HepG2 (cell line): ENCODE measurements at regions of chr5 and their contacts with region 1.

Region 1: DNA sequence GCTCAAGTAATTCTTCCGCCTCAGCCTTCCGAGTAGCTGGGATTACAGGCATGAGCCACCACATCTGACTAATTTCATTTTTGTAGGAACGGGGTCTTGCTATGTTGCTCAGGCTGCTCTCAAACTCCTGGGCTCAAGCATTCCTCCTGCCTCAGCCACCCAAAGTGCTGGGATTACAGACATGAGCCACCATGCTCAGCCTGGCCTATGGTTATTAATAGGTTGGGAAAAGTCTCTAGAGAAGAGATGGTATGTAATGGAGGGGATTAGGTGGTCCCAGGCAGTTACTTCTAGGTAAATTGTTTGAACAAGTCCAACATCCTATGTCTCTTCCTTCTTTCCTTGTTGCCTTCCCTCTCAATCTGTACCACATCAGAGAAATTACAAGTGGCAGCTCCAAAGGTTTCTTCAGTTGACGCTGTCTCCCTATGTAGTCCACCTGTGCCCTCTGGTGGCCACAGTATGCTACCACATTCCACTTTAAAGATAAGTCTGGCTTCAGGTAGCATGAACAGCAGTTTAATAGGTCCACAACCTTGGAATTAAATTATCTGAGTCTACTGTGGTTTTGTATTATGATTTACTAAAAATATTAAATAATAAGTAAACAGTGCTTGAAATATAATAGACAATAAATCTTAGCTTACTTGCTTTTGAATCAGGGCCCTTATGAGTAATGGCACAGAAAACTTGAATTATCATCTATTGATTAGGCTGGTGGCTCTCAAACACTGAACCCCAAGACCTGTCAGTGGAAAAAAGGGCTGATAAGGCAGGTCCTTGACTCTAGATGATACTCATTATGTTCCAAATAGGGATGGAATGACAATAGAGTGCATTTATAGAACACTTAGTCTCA is 9.7 kb downstream of the TIGD6 start:
- DNase-seq: peak; percentile 76
- ATAC-seq: peak; percentile 91
- H3K4me3 ChIP-seq: no peak overlapping the region
- H3K27ac ChIP-seq: no peak overlapping the region
- H3K4me1 ChIP-seq: peaks cover 19% of the 10 kb centered on the region
- H3K27me3 ChIP-seq: no peaks in the 10 kb centered on the region
- CTCF ChIP-seq: peak; percentile 93
- EP300 ChIP-seq: no peak
- POLR2A ChIP-seq: no peak
- RAD21 ChIP-seq: peak; percentile 86

Region 2: DNA sequence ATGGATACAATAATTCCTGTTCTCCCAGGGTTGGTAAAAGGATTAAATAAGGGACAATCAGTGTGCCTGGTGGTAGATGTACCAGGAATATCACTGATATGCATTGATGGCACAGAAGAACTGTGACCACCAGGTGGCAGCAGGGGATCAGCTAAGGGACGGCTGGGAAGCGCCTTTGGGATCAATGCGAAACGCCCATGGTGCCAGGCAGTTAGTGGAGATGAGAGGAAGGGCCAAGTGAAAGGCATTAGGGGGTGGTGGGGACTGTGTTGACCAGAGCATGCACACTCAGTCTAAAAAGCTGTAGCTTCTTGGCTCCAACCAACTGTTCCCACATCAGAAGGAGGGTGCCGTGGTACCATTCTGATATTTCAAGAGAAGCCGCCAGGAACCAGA is 353.9 kb before region 1 on chr5:
- CTCF ChIA-PET with region 1: no interaction called
- POLR2A ChIA-PET with region 1: no interaction called
- in situ Hi-C with region 1: loop called (anchors 25 kb)
- intact Hi-C with region 1: no loop called
- DNase-seq: peak; percentile 63
- ATAC-seq: peak; percentile 73
- H3K4me3 ChIP-seq: no peak overlapping the region
- H3K27ac ChIP-seq: no peak overlapping the region
- H3K4me1 ChIP-seq: peaks cover 27% of the 10 kb centered on the region
- H3K27me3 ChIP-seq: no peaks in the 10 kb centered on the region
- CTCF ChIP-seq: peak; percentile 94
- EP300 ChIP-seq: no peak
- POLR2A ChIP-seq: no peak
- RAD21 ChIP-seq: peak; percentile 91

Region 3: DNA sequence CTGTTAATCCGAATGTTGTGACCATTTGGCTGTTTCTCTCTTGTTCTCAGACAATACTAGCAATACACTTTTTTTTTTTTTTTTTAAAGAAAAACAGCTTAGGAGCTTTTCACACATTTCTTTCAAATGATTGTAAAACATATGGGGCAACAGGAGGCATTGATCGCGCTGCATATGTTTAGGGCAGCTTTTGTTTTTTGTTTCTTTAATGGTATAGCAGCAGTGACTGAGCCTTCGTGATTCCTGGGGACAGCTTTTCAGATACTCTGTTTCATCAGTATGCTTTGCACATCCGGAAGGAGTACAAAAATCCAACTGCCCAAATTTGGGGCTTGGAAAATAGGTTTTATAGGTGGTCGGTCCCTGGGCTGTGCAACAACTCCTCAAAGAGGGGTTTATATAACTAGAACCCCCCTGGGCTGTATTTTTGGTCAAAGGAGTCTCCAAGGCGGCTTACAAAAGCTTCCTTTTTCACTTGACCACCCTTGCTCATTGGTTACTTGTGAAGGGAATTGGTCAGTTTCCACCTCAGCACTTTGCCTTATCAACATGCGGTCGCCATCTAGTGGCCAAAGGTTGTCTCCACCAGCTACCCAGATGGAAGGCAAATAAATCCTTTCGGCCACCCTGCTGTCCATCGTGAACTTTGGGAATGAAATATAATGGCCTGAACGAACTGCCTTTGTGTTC is 138.0 kb before region 1 on chr5:
- CTCF ChIA-PET with region 1: interaction called, 5 read pairs
- POLR2A ChIA-PET with region 1: no interaction called
- in situ Hi-C with region 1: no loop called
- intact Hi-C with region 1: loop called (anchors 5 kb)
- DNase-seq: peak; percentile 58
- ATAC-seq: peak; percentile 92
- H3K4me3 ChIP-seq: no peak overlapping the region
- H3K27ac ChIP-seq: no peak overlapping the region
- H3K4me1 ChIP-seq: no peaks in the 10 kb centered on the region
- H3K27me3 ChIP-seq: no peaks in the 10 kb centered on the region
- CTCF ChIP-seq: peak; percentile 88
- EP300 ChIP-seq: no peak
- POLR2A ChIP-seq: no peak
- RAD21 ChIP-seq: 0 out of 2 replicates have a peak, but pooled peaks have one; percentile 35

Region 4: DNA sequence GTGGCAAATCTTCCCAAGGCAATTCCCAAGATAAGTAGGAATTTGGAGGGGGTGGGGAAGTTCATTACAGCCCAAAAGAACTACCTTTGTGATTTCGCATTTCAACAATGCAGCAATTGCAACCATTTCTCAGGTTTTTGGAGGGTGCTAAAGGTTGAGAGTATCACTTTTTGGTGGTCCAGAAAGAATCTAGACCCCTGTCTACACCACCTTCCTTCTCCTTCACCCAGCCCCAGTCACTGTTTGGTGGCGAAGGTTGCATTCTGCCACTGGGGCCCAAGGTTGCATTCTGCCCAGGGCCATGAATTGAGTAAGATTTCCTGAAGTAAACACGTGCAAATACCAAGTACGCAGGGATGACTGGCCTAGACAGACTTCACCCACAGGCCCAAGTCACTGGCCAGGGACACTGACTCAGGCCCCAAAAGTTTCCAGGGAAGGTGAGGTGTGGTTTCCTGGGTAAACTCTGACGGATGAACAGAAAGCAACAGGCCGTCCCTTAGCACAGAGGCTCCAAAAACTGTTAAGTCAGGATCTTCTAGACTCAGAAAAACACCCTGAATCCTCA is 51.9 kb before region 1 on chr5:
- CTCF ChIA-PET with region 1: interaction called, 5 read pairs
- POLR2A ChIA-PET with region 1: no interaction called
- in situ Hi-C with region 1: loop called (anchors 10 kb)
- intact Hi-C with region 1: no loop called
- DNase-seq: no peak
- ATAC-seq: 0 out of 3 replicates have a peak, but pooled peaks have one; percentile 17
- H3K4me3 ChIP-seq: no peak overlapping the region
- H3K27ac ChIP-seq: no peak overlapping the region
- H3K4me1 ChIP-seq: peaks cover 81% of the 10 kb centered on the region
- H3K27me3 ChIP-seq: peaks cover 1 to 5% of the 10 kb centered on the region in 2 experiments; a peak in 1 of 5 replicates
- CTCF ChIP-seq: no peak
- EP300 ChIP-seq: no peak
- POLR2A ChIP-seq: no peak
- RAD21 ChIP-seq: no peak

Region 5: DNA sequence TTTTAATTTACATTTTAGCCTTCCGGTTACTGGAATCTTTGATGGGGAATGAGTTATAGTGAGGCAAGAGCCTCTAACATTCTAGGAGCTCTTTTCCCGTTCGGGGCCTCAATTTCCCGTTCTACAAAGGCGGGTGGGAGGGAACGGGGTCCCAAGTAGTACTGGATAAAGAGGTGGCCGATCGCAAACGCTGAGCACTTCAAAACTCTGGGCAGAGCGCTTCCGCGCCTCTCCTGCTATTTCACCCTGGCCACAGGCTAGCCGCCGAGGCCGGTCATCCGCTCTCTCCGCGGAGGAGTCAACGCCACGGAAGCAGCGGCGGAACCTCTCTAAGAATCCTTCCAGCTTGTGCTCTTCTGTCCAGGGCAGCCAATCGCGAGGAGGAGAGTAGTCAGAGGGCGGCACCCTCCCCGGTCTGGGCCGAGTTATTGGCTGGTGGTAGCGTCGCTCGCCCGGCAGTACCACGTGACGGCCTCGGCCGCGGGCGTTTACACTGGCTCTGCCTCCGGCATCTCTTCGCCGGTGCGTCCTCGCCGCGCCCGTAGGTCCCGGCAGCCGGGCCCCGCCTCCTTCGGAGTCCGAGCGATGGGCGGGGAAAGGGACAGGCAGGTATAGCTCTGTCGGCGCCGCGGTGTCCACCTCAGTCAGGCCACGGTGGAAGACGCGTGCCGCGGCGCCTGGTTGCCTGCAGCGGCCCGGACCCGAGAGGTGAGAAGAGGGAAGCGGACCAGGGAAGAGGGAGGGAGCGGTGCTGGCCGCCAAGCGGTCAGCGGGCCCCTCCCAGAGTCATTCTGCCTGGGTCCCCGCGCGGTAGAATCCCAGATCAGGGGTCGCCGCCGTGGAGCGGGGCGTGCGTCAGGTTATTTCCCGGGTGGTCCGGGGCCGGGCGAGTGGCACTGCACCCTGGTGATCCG is 30.2 kb before region 1 on chr5 and contains the start of gene SLC26A2:
- CTCF ChIA-PET with region 1: no interaction called
- POLR2A ChIA-PET with region 1: interaction called, 4 read pairs
- in situ Hi-C with region 1: no loop called
- intact Hi-C with region 1: loop called (anchors 2 kb)
- DNase-seq: peak; percentile 92
- ATAC-seq: peak; percentile 99
- H3K4me3 ChIP-seq: peak within 1 kb of the TSS; percentile 51 to 77 (median 69)
- H3K27ac ChIP-seq: peak within 1 kb of the TSS; percentile 52
- H3K4me1 ChIP-seq: peaks cover 50% of the 10 kb centered on the region
- H3K27me3 ChIP-seq: no peaks in the 10 kb centered on the region
- CTCF ChIP-seq: peak; percentile 17; the same call in 1 of the 2 replicates
- EP300 ChIP-seq: no peak
- POLR2A ChIP-seq: peak; percentile 85 to 91
- RAD21 ChIP-seq: peak; percentile 48; the same call in 1 of the 2 replicates
- total RNA-seq, gene SLC26A2: 6.3 and 7.9 TPM in 2 replicates